ENCODE measurements at regions of chr2 and their contacts with region 1.

Region 1: DNA sequence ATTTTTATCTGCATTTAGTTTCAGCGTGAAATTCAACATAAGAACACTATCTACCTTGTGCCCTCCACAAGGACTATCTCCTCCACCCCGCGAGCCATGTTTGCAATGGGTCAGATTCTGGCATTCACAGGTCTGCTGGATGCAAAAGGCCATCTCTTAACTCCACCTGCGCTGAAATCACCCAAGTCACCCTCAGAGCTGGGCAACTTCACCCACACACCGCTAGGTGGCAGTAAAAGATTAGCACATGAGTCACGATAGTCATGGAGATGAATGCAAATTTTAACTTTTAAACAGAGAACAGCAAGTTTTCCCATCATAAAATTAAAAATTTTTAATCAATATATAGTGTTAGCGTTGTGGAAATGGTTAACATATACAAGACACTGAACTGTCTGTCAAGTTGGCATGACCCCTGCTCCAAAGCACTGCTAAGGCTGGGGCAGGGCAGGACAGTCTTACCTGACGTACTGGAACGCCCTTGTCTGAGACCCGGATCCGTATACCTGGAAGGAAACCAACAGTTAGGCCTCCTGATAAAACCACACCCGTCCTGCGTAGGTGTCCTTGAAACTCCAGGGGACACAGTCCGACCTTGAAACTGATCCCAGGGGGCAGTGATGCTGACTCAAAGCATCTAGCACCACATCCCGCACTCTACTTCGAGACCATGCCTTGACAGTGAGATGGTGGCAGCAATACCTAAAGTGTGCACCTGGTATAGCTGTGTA is 89.6 kb downstream of the UXS1 start:
- DNase-seq: peak; percentile 37
- H3K4me3 ChIP-seq: no peak overlapping the region
- CTCF ChIP-seq: peak; percentile 93

Region 2: GRCh38 chr2:106053116-106053515 is 51.4 kb before region 1 on chr2:
- in situ Hi-C with region 1: no loop called
- DNase-seq: peak; percentile 9
- H3K4me3 ChIP-seq: no peak overlapping the region
- CTCF ChIP-seq: no peak

Region 3: DNA sequence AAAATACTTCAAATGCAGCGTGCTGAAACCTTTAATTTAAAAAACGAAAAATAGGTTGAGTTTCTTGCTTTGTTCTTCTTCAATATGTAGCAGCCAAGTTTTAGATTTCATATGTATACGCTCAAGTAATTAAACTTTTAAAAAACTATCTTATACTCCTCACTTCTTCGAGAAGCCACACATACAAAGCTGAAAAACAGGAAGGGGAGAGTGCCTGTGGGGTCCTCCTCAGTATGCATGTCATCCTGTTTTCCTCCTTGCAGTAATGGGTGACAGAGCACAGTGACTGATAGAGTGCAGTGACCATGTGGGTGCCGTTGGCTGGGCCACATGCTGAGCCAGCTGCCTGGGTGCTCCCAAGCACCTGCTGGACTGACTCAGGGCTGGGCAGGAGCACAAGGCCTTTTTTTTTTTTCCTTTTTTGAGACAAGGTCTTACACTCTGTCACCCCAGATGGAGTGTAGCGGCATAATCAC is 56.3 kb after region 1 on chr2:
- in situ Hi-C with region 1: loop called (anchors 10 kb)
- DNase-seq: no peak
- H3K4me3 ChIP-seq: no peak overlapping the region
- CTCF ChIP-seq: no peak

Region 4: GRCh38 chr2:106193977-106194778 is 89.7 kb after region 1 on chr2 and contains the start of gene UXS1:
- in situ Hi-C with region 1: no loop called
- DNase-seq: peak; percentile 90
- H3K4me3 ChIP-seq: peak within 1 kb of the TSS; percentile 57
- CTCF ChIP-seq: no peak

Region 5: GRCh38 chr2:106749823-106750222 is 645.3 kb after region 1 on chr2:
- in situ Hi-C with region 1: no loop called
- DNase-seq: no peak
- H3K4me3 ChIP-seq: no peak overlapping the region
- CTCF ChIP-seq: no peak

Measured in astrocyte of the cerebellum (primary cell).